GM12878 (cell line): ENCODE measurements at regions of chr5 and their contacts with region 1.

Region 1: DNA sequence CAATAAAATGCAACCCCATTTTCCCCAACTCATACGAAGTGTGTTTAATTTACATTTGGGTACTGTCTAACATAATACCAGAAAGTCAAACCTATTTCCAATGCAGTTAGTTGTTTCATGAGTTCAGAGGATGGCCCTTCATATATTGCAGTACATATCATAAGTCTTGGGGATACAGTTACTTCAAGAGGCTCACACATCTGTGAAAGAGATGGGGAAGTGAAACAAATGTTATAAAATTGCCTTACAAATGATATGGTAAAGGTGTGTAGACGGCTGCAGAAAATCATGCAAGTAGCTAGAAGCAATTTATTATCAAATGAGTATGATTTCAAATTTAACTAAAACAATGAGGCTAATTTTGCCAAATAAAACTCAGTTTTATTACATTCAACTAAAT is 219.0 kb upstream of the CDH12 start:
- DNase-seq: no peak
- ATAC-seq: peak; percentile 96
- H3K4me3 ChIP-seq: no peak overlapping the region
- H3K27ac ChIP-seq: no peak overlapping the region
- H3K4me1 ChIP-seq: no peaks in the 10 kb centered on the region
- H3K27me3 ChIP-seq: no peaks in the 10 kb centered on the region
- CTCF ChIP-seq: no peak
- EP300 ChIP-seq: 0 out of 4 replicates have a peak, but pooled peaks of 1 of the 2 experiments have one; percentile 38
- POLR2A ChIP-seq: no peak
- RAD21 ChIP-seq: no peak

Region 2: DNA sequence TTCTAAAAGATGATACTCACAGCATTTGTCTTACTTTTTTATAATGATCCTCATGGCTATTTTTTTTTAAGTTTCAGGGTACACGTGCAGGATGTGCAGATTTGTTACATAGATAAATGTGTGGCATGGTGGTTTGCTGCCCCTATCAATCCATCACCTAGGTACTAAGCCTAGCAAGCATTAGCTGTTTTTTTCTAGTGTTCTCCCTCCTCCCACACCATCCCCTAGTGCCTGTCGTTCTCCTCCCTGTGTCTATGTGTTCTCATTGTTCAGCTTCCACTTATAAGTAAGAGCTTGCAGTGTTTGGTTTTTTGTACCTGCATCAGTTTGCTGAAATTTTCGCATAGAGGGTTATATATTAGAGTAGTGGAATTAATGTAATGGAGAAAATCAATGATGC is 30.0 kb before region 1 on chr5:
- CTCF ChIA-PET with region 1: interaction called, 3 read pairs
- POLR2A ChIA-PET with region 1: no interaction called
- RAD21 ChIA-PET with region 1: interaction called, 4 read pairs
- SMC1A ChIA-PET with region 1: interaction called, 10 read pairs
- in situ Hi-C with region 1: no loop called
- intact Hi-C with region 1: no loop called
- DNase-seq: no peak
- ATAC-seq: peak; percentile 70
- H3K4me3 ChIP-seq: no peak overlapping the region
- H3K27ac ChIP-seq: no peak overlapping the region
- H3K4me1 ChIP-seq: no peaks in the 10 kb centered on the region
- H3K27me3 ChIP-seq: no peaks in the 10 kb centered on the region; a peak in 1 of 4 replicates
- CTCF ChIP-seq: no peak
- EP300 ChIP-seq: no peak
- POLR2A ChIP-seq: no peak
- RAD21 ChIP-seq: no peak

Region 3: GRCh38 chr5:23053846-23054245 is 18.3 kb before region 1 on chr5:
- CTCF ChIA-PET with region 1: interaction called, 3 read pairs
- POLR2A ChIA-PET with region 1: no interaction called
- RAD21 ChIA-PET with region 1: interaction called, 3 read pairs
- SMC1A ChIA-PET with region 1: interaction called, 18 read pairs
- in situ Hi-C with region 1: no loop called
- intact Hi-C with region 1: no loop called
- DNase-seq: no peak
- ATAC-seq: peak; percentile 79
- H3K4me3 ChIP-seq: no peak overlapping the region
- H3K27ac ChIP-seq: no peak overlapping the region
- H3K4me1 ChIP-seq: no peaks in the 10 kb centered on the region
- H3K27me3 ChIP-seq: no peaks in the 10 kb centered on the region
- CTCF ChIP-seq: no peak
- EP300 ChIP-seq: no peak
- POLR2A ChIP-seq: no peak
- RAD21 ChIP-seq: no peak

Region 4: GRCh38 chr5:23084815-23085214 is 12.6 kb after region 1 on chr5:
- CTCF ChIA-PET with region 1: interaction called, 4 read pairs
- POLR2A ChIA-PET with region 1: no interaction called
- RAD21 ChIA-PET with region 1: interaction called, 8 read pairs
- SMC1A ChIA-PET with region 1: interaction called, 17 read pairs
- in situ Hi-C with region 1: no loop called
- intact Hi-C with region 1: no loop called
- DNase-seq: no peak
- ATAC-seq: peak; percentile 95
- H3K4me3 ChIP-seq: no peak overlapping the region
- H3K27ac ChIP-seq: no peak overlapping the region
- H3K4me1 ChIP-seq: no peaks in the 10 kb centered on the region
- H3K27me3 ChIP-seq: no peaks in the 10 kb centered on the region
- CTCF ChIP-seq: no peak
- EP300 ChIP-seq: no peak
- POLR2A ChIP-seq: no peak
- RAD21 ChIP-seq: no peak